Activated T-helper 1 cell treated with anti-CD3 and anti-CD28 coated beads, Interleukin-12 subunit alpha, Interleukin-12 subunit beta, Interleukin-2, Interleukin-4 antibody, amounts not matched to agents 30 ng/mL and 10 ng/mL and 1 ng/mL, durations not matched to agents 14 hours and 24 hours and 36 hours (primary cell): ENCODE measurements at regions of chr15 and their contacts with region 1.

Region 1: GRCh38 chr15:92714477-92715401 is 59.2 kb upstream of the FAM174B start:
- DNase-seq: peak; percentile 56
- H3K4me3 Mint-ChIP-seq: peak overlapping the region; percentile 64
- H3K27ac Mint-ChIP-seq: no peak overlapping the region
- H3K4me1 Mint-ChIP-seq: peaks cover 10% of the 10 kb centered on the region
- H3K27me3 Mint-ChIP-seq: peaks cover 34% of the 10 kb centered on the region

Region 2: GRCh38 chr15:91302588-91303439 is 1411.9 kb before region 1 on chr15:
- intact Hi-C with region 1: loop called (anchors 10 kb)
- DNase-seq: no peak
- H3K4me3 Mint-ChIP-seq: no peak overlapping the region
- H3K27ac Mint-ChIP-seq: no peak overlapping the region
- H3K4me1 Mint-ChIP-seq: peaks cover 16% of the 10 kb centered on the region
- H3K27me3 Mint-ChIP-seq: peaks cover 48% of the 10 kb centered on the region

Region 3: GRCh38 chr15:92277776-92278175 is 437.0 kb before region 1 on chr15:
- intact Hi-C with region 1: loop called (anchors 10 kb)
- DNase-seq: no peak
- H3K4me3 Mint-ChIP-seq: no peak overlapping the region
- H3K27ac Mint-ChIP-seq: no peak overlapping the region
- H3K4me1 Mint-ChIP-seq: no peaks in the 10 kb centered on the region
- H3K27me3 Mint-ChIP-seq: peaks cover 4% of the 10 kb centered on the region

Region 4: GRCh38 chr15:92521624-92522008 is 193.1 kb before region 1 on chr15:
- intact Hi-C with region 1: loop called (anchors 1 kb)
- DNase-seq: peak; percentile 4
- H3K4me3 Mint-ChIP-seq: no peak overlapping the region
- H3K27ac Mint-ChIP-seq: no peak overlapping the region
- H3K4me1 Mint-ChIP-seq: peaks cover 12% of the 10 kb centered on the region
- H3K27me3 Mint-ChIP-seq: peaks cover 2% of the 10 kb centered on the region

Region 5: GRCh38 chr15:92625251-92625980 is 89.3 kb before region 1 on chr15:
- intact Hi-C with region 1: loop called (anchors 2 kb)
- DNase-seq: no peak
- H3K4me3 Mint-ChIP-seq: peak overlapping the region; percentile 27
- H3K27ac Mint-ChIP-seq: peak overlapping the region; percentile 74
- H3K4me1 Mint-ChIP-seq: peaks cover 15% of the 10 kb centered on the region
- H3K27me3 Mint-ChIP-seq: peaks cover 5% of the 10 kb centered on the region

Region 6: GRCh38 chr15:92917606-92918407 is 203.1 kb after region 1 on chr15:
- intact Hi-C with region 1: no loop called
- DNase-seq: peak; percentile 86
- H3K4me3 Mint-ChIP-seq: peak overlapping the region; percentile 53
- H3K27ac Mint-ChIP-seq: peak overlapping the region; percentile 30
- H3K4me1 Mint-ChIP-seq: peaks cover 91% of the 10 kb centered on the region
- H3K27me3 Mint-ChIP-seq: no peaks in the 10 kb centered on the region

Region 7: DNA sequence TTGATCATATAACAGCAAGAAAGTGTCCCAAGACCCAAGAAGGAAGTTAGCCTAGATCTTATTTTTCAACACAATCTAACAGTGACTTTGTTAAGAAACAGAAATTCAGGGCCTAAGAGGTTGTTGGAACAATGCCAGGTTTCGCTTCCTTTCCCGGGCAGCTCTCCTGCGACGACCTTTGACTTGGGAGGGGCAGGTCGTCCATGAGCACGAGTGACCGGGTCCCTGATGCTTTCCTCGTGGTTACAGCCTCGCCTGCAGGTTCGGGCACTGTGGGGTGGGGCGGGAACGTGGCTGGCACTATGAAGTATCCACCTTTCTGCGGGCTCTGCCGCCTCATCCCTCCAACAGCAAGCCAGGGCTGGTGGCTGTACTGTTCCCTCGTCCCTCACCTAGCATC is 464.3 kb after region 1 on chr15:
- intact Hi-C with region 1: no loop called
- DNase-seq: no peak
- H3K4me3 Mint-ChIP-seq: no peak overlapping the region
- H3K27ac Mint-ChIP-seq: no peak overlapping the region
- H3K4me1 Mint-ChIP-seq: no peaks in the 10 kb centered on the region
- H3K27me3 Mint-ChIP-seq: peaks cover 4% of the 10 kb centered on the region